Activated CD8-positive, alpha-beta memory T cell treated with anti-CD3 and anti-CD28 coated beads, Interleukin-2, amount 10 ng/mL, durations not matched to agents 7 days and 5 days (primary cell): ENCODE measurements at regions of chr17 and their contacts with region 1.

Region 1: DNA sequence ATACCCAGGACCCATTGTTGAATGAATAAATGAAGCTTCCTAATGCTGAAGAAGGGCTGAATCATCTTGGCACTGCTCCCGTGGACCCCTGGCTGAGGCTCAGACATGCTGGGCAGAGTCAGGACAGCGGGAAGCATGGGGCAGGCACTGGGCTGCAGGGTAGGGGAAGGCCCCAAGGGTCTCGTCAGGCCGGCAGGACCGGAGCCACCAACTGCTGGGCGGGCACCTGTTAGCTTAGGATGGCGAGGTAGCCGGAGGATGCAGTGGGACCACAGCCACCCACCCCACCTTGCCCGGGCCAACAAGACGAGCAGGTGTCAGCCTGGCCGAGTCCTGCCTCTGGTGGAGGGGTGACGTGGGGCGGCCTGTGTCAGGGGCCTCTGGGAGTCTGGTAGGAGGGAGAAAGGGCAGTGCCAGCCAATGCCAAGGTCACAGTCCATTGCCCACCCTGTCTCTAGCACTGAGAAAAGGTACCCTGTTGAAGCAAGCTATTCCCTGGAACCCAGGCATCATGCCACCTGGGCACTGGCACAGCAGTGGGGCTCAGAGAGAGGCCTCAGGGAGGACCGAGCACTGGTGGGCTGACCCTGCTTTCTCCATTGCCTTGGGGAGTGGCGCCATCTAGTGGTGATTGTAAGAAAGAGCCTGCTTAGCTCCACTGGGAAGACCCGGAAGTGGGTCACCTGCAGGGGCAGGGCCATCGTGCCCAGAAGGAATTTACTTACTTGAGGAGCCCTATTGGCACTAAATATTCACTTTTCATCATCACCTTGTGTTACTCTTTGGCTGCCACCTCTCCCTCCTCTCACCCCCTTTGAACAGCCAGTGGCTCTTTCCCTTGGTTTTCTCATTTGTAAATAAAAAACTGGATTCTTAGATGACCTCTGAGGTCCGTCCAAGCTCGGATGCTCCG is 3.0 kb upstream of the DLX3 start:
- DNase-seq: peak; percentile 90
- ATAC-seq: peak; percentile 93
- H3K4me3 Mint-ChIP-seq: no peak overlapping the region
- H3K27ac Mint-ChIP-seq: no peak overlapping the region
- H3K4me1 Mint-ChIP-seq: peaks cover 24% of the 10 kb centered on the region
- H3K27me3 Mint-ChIP-seq: peaks cover 71% of the 10 kb centered on the region

Region 2: DNA sequence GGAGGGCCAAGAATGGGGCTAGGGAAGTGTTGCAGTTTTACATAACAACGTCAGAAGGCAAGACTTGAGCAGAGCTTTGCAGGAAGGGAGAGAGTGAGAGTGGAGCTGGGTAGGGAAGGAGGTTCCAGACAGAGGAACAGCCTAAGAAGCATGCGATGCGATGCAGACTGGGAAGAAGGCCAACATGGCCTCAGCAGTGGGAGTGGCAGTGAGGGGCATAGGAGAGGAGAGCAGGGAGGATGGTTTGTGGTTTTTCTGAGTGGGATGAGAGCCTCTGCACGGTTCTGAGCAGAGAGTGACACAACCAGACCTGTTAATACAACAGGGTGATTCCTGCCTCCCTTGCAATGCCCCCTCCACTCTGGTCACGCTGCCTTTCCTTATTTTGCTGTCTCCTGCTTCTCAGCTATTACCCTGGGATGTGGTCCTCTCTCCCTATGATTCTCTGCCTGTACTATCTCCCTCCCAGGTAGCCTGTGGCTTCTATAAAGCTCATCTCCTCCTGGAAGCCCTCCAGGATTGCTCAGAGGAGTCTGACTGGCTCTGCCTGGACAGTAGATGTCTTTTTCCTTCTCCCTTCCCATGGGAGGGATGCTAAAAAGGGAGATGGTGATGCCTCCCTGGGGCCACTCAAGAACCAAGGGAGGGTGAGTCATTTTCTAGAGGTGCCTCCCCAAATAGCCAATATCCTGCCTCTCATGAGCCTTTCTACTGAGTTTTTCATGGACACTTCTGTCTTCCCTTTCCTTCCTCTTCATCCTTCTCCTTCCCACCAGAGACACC is 541.7 kb before region 1 on chr17:
- CTCF ChIA-PET with region 1: no interaction called
- DNase-seq: no peak
- ATAC-seq: no peak
- H3K4me3 Mint-ChIP-seq: no peak overlapping the region
- H3K27ac Mint-ChIP-seq: no peak overlapping the region
- H3K4me1 Mint-ChIP-seq: peaks cover 9% of the 10 kb centered on the region
- H3K27me3 Mint-ChIP-seq: peaks cover 50% of the 10 kb centered on the region

Region 3: DNA sequence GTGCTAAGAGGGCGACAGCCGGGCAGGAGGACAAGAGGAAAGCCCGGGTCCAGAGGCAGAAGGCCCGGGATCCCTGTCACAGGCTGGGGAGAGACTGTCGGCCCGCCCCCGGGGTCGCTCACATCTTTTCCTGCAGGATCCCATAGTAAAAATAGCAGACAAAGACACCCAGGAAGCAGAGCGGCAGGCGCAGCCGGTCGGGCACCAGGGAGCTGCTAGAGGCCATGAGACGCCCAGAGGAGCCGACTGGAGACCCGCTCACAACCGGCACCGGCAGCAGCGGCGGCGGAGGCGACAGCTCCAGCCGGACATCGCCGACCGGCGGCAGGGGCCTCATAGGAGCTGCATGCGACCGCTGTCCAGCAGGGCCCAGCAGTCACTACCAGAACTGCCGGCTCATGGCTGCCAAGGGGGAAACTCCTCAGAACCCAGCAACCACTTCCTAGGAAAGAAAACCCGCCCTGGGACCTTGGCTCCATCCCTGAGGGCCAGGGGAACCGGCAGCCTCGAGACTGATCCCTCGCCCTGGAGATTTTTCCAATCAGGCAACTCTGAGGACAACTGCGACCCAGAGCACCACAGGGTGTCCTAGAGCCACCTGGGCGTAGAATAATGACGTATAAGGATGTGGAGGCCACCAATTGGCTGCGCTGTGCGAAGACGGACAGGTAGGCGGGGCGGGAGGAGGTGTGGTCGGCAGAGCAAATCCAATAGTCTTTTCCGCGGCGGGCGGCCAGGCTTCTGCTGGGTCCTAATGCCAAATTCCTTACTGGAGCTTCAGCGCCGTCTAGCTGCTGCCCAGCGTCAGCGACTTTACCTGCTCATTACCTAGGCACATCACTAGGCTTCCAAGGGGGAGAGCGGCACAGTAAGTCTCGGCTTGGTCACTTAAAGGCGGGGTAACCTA is 290.2 kb before region 1 on chr17 and contains the start of gene SLC35B1:
- CTCF ChIA-PET with region 1: interaction called, 11 read pairs
- DNase-seq: peak; percentile 99
- ATAC-seq: peak; percentile 99
- H3K4me3 Mint-ChIP-seq: peak within 1 kb of the TSS; percentile 89
- H3K27ac Mint-ChIP-seq: peak within 1 kb of the TSS; percentile 96
- H3K4me1 Mint-ChIP-seq: peaks cover 45% of the 10 kb centered on the region
- H3K27me3 Mint-ChIP-seq: no peaks in the 10 kb centered on the region
- total RNA-seq, gene SLC35B1: 47.3 to 78.1 TPM

Region 4: GRCh38 chr17:49880291-49881053 is 117.6 kb before region 1 on chr17:
- CTCF ChIA-PET with region 1: interaction called, 124 read pairs
- DNase-seq: peak; percentile 80
- ATAC-seq: peak; percentile 98
- H3K4me3 Mint-ChIP-seq: no peak overlapping the region
- H3K27ac Mint-ChIP-seq: no peak overlapping the region
- H3K4me1 Mint-ChIP-seq: no peaks in the 10 kb centered on the region
- H3K27me3 Mint-ChIP-seq: peaks cover 48% of the 10 kb centered on the region

Region 5: GRCh38 chr17:49944273-49944890 is 53.7 kb before region 1 on chr17:
- CTCF ChIA-PET with region 1: interaction called, 273 read pairs
- DNase-seq: no peak
- ATAC-seq: no peak
- H3K4me3 Mint-ChIP-seq: no peak overlapping the region
- H3K27ac Mint-ChIP-seq: no peak overlapping the region
- H3K4me1 Mint-ChIP-seq: no peaks in the 10 kb centered on the region
- H3K27me3 Mint-ChIP-seq: peaks cover 32% of the 10 kb centered on the region

Region 6: DNA sequence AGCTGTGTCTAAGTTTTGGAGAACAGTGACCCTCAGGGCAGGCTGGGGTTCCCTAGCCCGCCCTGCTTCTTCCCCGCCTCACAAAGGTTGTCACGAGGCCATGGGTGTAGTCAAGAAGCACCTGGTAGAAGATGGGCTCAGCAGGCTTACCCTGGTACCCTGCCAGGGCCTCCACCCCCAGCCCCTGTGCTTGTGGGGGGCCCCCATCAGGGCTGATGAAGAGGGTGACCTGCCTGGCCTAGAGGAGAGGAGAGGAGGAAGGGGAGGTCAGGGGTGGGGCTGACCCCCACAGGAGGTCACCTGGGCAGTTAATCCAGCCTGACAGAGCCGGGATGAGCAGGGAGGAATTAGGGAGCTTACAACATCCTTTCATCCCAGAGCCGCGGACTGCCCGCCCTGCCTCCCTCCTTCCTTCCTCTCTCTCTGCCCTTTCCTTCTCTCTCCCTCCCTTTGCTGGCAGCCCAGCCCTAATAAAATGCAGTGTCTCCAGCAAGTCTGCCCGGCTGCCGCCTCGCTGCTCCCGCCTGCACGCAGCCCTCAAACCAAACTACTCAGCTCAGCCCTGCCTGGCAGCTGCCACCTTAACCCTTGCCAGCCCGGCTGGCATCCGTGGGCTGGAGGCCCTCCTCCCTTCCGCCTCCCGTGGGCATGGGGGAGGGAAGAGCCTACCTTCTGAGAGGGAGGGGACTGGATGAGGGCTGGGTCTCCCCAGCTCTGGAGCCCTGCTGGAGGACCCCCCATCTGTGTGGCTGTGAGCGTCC is 10.2 kb before region 1 on chr17:
- CTCF ChIA-PET with region 1: interaction called, 44 read pairs
- DNase-seq: no peak
- ATAC-seq: no peak
- H3K4me3 Mint-ChIP-seq: no peak overlapping the region
- H3K27ac Mint-ChIP-seq: no peak overlapping the region
- H3K4me1 Mint-ChIP-seq: peaks cover under 1% of the 10 kb centered on the region
- H3K27me3 Mint-ChIP-seq: peaks cover 69% of the 10 kb centered on the region

Region 7: DNA sequence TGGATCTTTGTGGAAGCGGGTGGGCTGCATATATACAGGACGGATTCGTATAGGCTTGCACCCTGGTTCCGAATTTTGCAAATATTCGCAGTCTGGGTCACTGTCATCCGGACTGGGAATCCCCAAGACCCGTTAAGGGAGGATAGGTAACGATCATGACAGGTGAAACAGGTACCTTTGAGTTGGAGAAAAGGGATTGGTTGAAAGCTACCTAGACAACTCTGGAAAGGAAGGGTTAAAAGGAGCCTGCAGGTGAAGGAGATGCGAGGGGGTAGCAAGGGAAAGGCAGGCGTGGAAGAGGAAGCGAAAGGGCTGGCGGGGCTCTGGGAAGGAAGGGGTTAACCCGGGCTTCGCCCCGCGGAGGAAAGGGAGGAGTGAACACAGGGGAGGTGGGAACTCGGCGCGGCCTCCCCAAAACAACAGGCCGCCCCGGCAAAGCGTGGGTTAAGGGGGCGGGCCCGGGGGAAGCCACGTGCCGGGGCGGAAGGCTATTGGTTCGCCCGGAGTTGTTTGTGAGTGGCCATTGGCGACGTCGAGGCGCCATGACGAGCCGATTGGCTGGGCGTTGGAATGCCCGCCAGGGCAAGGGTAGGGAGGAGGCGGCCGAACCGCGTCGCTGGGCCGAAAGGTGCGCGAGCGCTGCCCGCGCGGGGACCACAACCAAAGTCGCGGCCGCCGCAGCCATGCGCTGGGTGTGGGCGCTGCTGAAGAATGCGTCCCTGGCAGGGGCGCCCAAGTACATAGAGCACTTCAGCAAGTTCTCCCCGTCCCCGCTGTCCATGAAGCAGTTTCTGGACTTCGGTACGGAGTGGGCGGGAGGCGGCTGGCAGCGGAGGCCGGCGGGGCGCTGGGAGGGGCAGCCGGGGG is 96.9 kb after region 1 on chr17 and contains the start of gene PDK2:
- CTCF ChIA-PET with region 1: interaction called, 35 read pairs
- DNase-seq: peak; percentile 98
- ATAC-seq: peak; percentile 96
- H3K4me3 Mint-ChIP-seq: peak within 1 kb of the TSS; percentile 96
- H3K27ac Mint-ChIP-seq: peak within 1 kb of the TSS; percentile 91
- H3K4me1 Mint-ChIP-seq: peaks cover 24% of the 10 kb centered on the region
- H3K27me3 Mint-ChIP-seq: no peaks in the 10 kb centered on the region
- total RNA-seq, gene PDK2: 13.6 to 20.9 TPM

Region 8: DNA sequence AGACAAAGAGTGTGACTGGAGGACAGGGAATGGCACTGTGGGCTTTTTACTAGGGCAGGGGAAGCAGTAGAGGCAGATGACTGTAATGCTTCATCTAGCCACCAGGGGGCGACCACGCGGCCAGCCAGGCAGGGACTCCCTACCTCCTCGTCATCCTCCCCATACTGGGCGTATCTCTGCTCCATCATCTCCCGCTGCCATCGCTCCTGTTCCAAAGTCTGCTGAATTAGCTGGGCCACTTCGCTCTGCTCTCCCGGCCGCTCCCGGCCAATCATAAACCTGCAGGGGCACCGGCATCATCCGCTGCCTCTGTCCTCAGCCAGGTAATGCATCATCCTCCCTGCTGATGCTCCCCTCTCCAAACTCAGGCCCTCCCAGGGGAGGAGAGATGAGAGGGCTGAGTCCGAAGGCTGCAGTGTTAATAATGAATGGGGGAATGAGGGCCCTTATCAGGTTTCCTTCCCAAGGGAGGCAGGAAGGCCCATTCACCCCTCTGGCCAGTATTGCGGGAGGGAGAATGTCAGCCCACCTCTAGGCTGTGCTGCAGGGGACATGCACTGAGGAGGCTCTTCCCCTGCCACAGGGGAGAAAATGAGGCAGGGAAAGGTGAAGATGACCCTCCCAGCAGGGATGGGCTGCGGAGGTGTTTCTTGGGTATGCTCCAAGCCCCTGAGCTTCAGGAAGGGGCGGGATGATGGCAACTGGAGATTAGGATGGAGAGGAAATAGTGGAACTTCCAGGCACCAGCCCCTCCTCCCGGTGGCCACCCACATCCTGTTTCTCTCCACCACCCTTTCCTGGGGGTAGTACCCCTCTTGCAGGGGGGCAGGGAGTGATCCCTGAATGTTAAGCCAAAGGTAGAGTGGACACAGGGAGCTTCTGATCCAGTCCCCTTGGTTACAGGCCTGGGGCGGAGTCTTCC is 142.2 kb after region 1 on chr17:
- CTCF ChIA-PET with region 1: no interaction called
- DNase-seq: peak; percentile 88
- ATAC-seq: peak; percentile 88
- H3K4me3 Mint-ChIP-seq: peak overlapping the region; percentile 12
- H3K27ac Mint-ChIP-seq: peak overlapping the region; percentile 79
- H3K4me1 Mint-ChIP-seq: peaks cover 49% of the 10 kb centered on the region
- H3K27me3 Mint-ChIP-seq: no peaks in the 10 kb centered on the region